Right lobe of liver (tissue), 6 donors: ENCODE measurements at regions of chr5 and their contacts with region 1.

Region 1: GRCh38 chr5:1161833-1162229 is 39.6 kb upstream of the SLC6A19 start:
- DNase-seq: peak; percentile 72 to 89 (median 89)
- ATAC-seq: peak; percentile 81 to 89 (median 86)
- H3K4me3 ChIP-seq: no peak overlapping the region
- H3K27ac ChIP-seq: no peak overlapping the region
- H3K4me1 ChIP-seq: no peaks in the 10 kb centered on the region
- H3K27me3 ChIP-seq: no peaks in the 10 kb centered on the region
- CTCF ChIP-seq: no peak
- POLR2A ChIP-seq: no peak

Region 2: DNA sequence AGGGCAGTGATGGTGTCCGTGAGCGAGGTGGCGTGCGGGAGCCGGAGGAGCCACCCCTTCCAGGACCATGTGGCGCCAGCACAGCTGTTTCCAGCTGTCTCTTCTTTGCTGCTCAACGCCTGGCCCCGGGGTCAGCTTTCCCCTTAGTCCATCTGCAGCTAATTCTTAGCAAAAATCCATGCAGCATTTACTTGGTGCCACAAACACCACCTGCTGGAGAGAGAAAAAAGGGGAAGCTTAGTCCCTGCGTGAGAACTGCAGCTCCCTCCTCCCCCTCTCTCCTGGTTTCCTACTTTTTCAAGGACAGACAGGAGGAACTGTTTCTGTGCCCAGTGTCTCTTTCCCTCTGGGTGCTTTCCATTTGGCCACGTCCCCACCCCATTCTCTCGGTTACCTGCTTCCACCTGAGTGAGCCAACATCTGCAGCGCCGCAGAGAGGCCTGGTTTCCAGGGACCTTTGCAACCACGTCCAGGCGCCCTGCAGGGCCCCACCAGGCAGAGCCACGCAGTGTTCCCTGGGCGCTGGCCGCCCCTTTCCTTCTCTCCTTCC is 42.9 kb after region 1 on chr5:
- intact Hi-C with region 1: loop called in 1 of 2 experiments (anchors 5 kb)
- DNase-seq: peak in 1 of 3 donors; percentile 46
- ATAC-seq: peak; percentile 70 to 83 (median 78)
- H3K4me3 ChIP-seq: no peak overlapping the region
- H3K27ac ChIP-seq: no peak overlapping the region
- H3K4me1 ChIP-seq: no peaks in the 10 kb centered on the region
- H3K27me3 ChIP-seq: no peaks in the 10 kb centered on the region
- CTCF ChIP-seq: peak; percentile 46 to 64 (median 56)
- POLR2A ChIP-seq: no peak

Region 3: GRCh38 chr5:1255081-1255561 is 93.3 kb after region 1 on chr5:
- intact Hi-C with region 1: no loop called
- DNase-seq: no peak
- ATAC-seq: no peak
- H3K4me3 ChIP-seq: no peak overlapping the region
- H3K27ac ChIP-seq: no peak overlapping the region
- H3K4me1 ChIP-seq: no peaks in the 10 kb centered on the region
- H3K27me3 ChIP-seq: no peaks in the 10 kb centered on the region
- CTCF ChIP-seq: no peak
- POLR2A ChIP-seq: no peak

Region 4: DNA sequence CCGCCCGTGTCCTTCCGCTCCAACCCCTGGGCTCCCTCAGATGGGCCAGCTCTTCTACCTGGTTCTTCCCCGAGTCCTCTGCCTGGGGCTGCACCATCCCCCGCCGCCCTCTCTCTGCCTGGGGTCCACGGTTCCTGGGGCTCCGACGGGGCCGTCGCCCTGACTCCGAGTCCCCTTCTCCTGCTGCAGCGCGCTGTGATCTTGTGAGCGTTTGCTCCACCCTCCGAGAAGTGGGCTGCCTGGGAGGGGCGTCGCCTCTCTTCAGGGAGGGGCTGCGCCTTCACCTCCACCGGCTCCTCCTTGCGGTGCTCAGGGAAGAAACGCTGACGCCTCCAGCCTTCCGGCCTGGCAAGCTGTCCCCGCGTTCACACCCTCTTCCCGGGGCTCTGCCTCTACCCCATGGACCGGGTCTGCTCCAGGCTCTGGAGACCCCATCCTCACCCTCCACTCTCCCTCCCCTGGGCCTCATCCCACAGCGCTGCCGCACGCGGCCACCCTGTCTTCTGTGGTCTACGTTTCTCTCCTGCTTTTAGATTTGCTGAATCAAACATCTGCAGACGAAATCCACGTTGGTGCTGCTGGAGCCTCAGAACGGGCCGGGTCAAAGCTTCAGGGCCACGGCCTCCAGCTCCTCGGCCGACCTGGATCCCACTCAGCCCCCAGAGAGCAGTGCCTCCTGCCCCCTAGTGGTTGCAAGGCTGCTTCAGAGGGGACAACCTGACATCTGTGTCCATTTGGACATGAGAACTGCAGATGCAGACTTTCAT is 306.1 kb after region 1 on chr5:
- intact Hi-C with region 1: no loop called
- DNase-seq: peak in 2 of 3 donors; percentile 33 to 55
- ATAC-seq: no peak
- H3K4me3 ChIP-seq: no peak overlapping the region
- H3K27ac ChIP-seq: no peak overlapping the region
- H3K4me1 ChIP-seq: peaks cover 0 to 6% (median 0%) of the 10 kb centered on the region in 4 donors
- H3K27me3 ChIP-seq: no peaks in the 10 kb centered on the region
- CTCF ChIP-seq: peak; percentile 31 to 45 (median 36)
- POLR2A ChIP-seq: no peak